ENCODE measurements at regions of chr13 and their contacts with region 1.

Region 1: DNA sequence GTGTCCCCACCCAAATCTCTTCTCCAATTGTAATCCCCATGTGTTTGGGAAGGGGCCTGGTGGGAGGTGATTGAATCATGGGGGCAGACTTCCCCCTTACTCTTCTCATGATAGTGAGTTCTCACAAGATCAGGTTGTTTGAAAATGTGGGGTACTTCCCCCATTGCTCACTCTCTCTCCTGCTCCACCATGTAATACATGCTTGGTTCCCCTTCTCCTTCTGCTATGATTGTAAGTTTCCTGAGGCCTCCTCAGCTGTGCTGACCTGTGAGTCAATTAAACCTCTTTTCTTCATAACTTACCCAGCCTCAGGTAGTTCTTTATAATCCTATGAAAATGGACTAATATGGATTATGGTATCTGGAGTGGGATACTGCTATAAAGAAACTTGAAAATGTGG is 24.1 kb downstream of the ING1 start:
- DNase-seq: no peak
- ATAC-seq: no peak
- H3K4me3 ChIP-seq: no peak overlapping the region
- H3K27ac ChIP-seq: no peak overlapping the region
- H3K4me1 ChIP-seq: no peaks in the 10 kb centered on the region
- H3K27me3 ChIP-seq: no peaks in the 10 kb centered on the region
- CTCF ChIP-seq: no peak
- POLR2A ChIP-seq: no peak

Region 2: GRCh38 chr13:110615322-110616102 is 122.0 kb before region 1 on chr13 and contains the start of gene NAXD:
- intact Hi-C with region 1: no loop called
- DNase-seq: peak; percentile 94 to 97 (median 96)
- ATAC-seq: peak; percentile 80 to 91 (median 85)
- H3K4me3 ChIP-seq: peak within 1 kb of the TSS; percentile 81 to 86 (median 83)
- H3K27ac ChIP-seq: peak within 1 kb of the TSS; percentile 95 to 99 (median 99)
- H3K4me1 ChIP-seq: peaks cover 0 to 30% (median 14%) of the 10 kb centered on the region in 4 donors
- H3K27me3 ChIP-seq: no peaks in the 10 kb centered on the region
- CTCF ChIP-seq: no peak
- POLR2A ChIP-seq: peak; percentile 94
- total RNA-seq, gene NAXD: 24.2 to 41.9 (median 29.9) TPM

Region 3: DNA sequence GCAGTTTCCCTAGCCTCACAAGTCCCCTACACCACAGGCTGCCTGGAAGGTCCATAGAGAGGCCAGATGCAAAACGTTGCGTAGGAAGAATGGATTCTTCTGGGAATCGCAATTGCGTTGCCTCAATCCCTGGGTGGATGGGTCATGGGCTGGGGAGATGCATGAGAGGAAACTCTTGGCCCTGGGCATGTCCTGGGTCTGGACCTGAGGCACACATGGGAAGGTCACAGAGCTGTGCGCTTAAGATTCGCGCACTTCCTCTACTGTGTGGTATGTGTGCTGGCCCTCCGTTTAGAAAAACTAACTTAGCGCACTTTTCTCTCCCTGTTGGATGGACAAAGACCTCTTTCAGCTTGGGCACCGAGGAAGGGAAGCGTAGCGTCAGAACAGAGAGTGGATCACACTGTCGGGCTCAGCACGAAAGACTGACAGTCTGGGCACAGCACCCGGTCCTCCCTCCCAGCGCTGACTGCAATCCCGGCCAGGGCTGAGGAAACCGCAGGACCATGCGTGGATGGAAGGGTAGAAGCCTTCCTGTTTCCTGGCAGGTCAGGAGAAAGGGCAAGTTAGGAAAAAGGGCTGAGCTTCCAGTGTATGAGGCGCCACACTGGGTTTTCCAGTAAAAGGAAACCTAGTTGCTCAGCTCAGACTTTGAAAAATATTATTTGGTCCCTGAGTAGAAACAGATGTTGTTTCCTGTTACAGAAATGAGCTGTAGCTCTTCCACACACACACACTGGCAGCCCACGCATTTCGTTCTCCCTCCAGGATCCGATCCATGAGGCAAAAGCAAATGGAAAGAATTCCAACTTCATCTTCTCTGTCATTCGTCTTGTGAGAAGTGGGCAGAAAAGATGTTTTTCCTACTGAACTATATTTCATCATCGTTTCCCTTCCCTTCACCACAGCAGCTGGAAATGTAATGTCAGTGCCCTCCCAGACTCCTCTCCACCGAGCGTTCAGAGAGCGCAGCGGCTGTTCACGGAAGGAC is 62.0 kb after region 1 on chr13:
- intact Hi-C with region 1: loop called in 1 of 2 experiments (anchors 10 kb)
- DNase-seq: no peak
- ATAC-seq: peak; percentile 11 to 19 (median 14)
- H3K4me3 ChIP-seq: no peak overlapping the region
- H3K27ac ChIP-seq: peak overlapping the region in 2 of 3 donors; percentile 24 to 37
- H3K4me1 ChIP-seq: peaks cover 0 to 8% (median 2%) of the 10 kb centered on the region in 4 donors
- H3K27me3 ChIP-seq: no peaks in the 10 kb centered on the region
- CTCF ChIP-seq: no peak
- POLR2A ChIP-seq: no peak

Measured in right lobe of liver (tissue), 6 donors.